ENCODE measurements at regions of chr17 and their contacts with region 1.

Region 1: GRCh38 chr17:76557368-76558197 is 17.7 kb downstream of the PRCD start:
- DNase-seq: peak; percentile 97
- H3K4me3 Mint-ChIP-seq: peak overlapping the region; percentile 96
- H3K27ac Mint-ChIP-seq: peak overlapping the region; percentile 96
- H3K4me1 Mint-ChIP-seq: peaks cover 54% of the 10 kb centered on the region
- H3K27me3 Mint-ChIP-seq: no peaks in the 10 kb centered on the region

Region 2: DNA sequence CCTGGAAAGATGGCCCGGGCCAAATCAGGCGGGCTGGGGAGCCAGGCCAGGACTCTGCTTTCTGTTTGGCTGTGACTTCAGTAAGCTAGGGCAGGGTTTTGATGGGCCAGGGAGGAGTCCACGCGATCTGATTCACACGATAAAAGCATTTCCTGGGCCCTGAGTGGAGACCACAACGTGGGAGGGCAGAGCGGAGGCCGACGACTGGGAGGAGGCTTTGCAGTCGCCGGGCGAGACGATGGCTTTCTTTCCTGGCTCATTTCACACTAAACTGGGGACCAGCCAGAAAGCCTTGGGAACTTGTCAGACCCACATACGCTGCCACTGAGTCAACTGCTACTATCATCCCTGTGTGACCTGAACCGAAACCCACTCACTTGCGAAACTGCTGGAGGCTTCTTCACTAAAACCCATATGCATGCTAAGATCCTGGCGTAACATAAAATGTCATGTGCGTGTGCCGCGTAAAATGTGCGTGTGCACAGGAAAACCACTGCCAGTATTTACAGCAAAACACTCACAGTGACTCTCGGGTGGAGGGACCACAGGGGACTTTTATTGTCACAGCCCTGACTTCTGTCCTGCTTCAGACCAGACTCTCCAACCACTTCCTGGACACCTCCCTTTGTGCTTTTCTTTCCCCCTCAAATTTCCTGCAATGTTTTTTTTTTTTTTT is 42.2 kb before region 1 on chr17:
- CTCF ChIA-PET with region 1: no interaction called
- intact Hi-C with region 1: loop called (anchors 2 kb)
- DNase-seq: peak; percentile 88
- H3K4me3 Mint-ChIP-seq: peak overlapping the region; percentile 62
- H3K27ac Mint-ChIP-seq: peak overlapping the region; percentile 92
- H3K4me1 Mint-ChIP-seq: peaks cover 22% of the 10 kb centered on the region
- H3K27me3 Mint-ChIP-seq: no peaks in the 10 kb centered on the region

Region 3: DNA sequence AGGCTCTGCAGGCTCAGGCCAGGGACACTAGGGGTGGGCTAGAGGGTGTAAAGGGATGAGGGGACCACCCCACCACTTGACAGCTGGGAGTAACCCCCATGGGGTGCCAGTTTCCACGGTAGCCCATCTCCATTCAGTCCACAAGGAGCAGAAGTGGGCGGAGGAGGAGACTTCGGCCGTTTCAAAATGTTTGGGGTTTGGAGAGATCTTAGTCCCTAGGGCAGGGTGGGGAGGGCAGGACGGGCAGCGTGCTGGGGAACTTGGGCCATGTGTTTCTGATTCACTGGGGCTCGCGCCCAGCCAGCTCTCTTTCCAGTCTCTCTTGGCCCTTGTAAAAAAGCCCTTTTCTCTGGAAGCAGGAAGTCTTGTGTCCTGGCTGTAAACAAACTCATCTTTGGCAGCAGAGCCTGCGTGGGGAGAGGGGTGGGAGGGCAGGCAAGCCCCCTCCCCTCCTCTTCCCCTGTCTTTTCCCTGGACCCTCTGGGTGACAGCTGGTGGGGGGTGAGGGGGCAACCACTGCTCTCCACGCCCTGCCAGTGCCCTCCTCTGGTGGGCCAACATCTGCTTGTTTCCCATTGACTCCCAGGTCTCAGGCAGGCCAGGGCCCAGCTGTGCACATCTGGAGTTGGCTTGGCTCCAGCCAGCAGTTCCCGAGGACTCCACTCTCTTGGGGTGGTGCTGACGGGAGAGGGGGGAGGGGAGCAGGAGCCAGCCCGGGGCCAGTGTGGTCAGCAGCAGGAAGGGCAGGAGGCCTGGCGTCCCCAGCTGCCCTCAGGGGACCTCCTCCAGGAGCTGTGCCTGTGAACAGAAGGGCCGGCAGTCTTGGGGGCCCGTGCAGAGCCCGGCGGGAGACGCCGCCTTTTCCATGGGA is 28.1 kb before region 1 on chr17:
- CTCF ChIA-PET with region 1: no interaction called
- intact Hi-C with region 1: no loop called
- DNase-seq: no peak
- H3K4me3 Mint-ChIP-seq: no peak overlapping the region
- H3K27ac Mint-ChIP-seq: no peak overlapping the region
- H3K4me1 Mint-ChIP-seq: peaks cover 22% of the 10 kb centered on the region
- H3K27me3 Mint-ChIP-seq: no peaks in the 10 kb centered on the region

Region 4: DNA sequence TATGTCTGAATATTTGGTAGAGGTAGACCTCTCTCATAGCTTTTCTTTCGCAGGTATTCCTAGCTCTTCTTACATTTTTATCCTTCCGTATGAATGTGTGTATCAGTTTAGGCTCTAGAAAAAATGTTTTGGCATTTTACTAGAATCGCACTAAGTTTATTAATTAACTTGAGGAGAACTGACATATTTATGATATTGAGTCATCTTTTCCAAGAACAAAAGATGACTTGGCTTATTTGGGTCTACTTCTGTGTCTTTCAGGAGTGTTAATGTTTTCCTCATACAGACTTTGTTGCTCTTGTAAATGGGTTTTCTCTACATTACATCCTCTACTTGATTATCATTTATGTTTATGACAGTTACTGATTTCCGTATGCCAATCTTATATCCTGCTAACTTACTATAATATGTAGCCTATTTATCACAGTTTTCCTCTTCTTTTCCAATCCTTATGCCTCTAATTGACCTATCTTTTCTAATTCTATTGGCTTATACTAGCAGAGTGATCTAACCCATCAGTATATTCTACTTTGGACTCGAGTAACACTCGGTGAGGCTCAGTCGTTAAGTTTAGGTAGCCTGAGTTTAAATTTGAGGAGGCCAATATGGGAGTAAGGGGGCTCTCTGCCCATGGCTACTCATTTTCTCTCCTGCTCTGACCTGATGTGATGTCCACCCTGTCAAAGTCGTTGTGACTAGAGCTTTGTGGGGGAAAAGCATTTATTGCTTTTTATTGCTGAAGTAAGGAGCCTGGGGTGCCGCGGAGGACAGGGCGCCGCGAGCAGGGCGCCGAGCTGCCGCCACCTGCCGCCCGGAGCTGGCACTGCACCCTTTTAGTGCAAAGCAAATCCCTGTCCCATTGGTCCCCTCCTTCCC is 65.9 kb after region 1 on chr17:
- CTCF ChIA-PET with region 1: interaction called, 19 read pairs
- intact Hi-C with region 1: loop called (anchors 1 kb)
- DNase-seq: peak; percentile 83
- H3K4me3 Mint-ChIP-seq: no peak overlapping the region
- H3K27ac Mint-ChIP-seq: no peak overlapping the region
- H3K4me1 Mint-ChIP-seq: peaks cover 7% of the 10 kb centered on the region
- H3K27me3 Mint-ChIP-seq: peaks cover 7% of the 10 kb centered on the region

Region 5: DNA sequence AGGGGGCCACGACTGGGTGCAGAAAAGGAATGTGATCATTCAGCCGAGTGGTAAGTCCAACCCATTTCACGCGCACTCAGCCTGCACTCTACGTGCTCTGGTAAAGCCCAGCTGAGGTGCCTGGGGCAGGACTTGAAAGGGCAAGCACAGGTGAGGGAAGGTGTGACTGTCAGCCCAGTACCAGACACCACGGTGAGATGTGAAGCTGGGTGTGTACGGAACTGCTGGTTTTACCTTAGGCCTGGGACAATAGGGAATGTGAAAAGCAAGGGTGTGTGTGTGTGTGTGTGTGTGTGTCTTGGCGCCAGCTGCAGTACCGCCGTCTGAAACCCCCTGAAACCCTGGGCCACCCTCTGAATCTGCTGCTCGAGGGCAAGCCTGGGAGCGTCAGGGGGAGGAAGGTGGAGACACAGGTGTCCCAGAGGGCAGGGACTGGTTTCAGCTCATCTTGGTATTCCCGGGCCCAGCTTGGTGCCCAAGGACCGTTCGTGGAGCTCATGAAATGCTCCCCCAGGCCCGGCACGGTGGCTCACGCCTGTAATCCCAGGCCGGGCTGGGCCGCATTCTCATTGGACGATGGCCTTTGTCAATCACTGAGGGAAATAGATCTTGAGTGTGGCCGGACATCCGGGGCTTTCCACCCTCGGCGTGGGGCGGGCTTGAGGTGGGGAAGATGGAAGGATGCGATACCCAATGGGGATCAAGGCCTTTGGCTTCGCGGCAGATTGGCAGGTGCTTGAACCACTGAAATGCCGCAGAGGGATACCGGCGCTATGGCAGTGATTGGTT is 113.7 kb after region 1 on chr17:
- CTCF ChIA-PET with region 1: interaction called, 7 read pairs
- intact Hi-C with region 1: loop called (anchors 2 kb)
- DNase-seq: peak; percentile 100
- H3K4me3 Mint-ChIP-seq: peak overlapping the region; percentile 93
- H3K27ac Mint-ChIP-seq: peak overlapping the region; percentile 92
- H3K4me1 Mint-ChIP-seq: peaks cover 29% of the 10 kb centered on the region
- H3K27me3 Mint-ChIP-seq: no peaks in the 10 kb centered on the region